Heart right ventricle (tissue), 16 donors: ENCODE measurements at regions of chr12 and their contacts with region 1.

Region 1: DNA sequence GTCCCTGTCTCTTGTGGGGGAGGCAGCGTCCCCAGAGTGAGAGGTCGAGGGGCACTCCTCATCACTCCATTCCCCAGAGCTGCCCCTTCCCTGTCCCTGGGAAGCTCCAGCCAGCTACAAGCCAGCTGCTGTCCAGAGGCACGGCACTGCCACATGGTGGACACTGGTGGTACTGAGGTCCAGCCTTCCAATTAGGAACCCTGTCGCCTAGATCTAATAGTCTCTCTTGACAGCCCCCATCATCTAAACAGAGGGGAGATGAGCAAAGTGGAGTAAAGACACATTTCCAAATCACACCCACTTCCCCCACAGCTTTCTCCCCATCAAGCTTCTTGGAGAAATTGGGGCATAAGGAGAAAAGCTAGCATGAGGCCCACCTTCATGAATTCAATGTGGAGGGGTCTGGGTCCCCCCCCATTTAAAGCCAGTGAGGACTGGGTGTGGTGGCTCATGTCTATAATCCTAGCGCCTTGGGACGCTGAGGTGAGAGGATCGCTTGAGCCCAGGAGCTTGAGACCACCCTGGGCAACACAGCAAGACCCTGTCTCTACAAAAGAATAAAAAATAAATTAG is 2.1 kb upstream of the INHBE start:
- DNase-seq: peak; percentile 82
- ATAC-seq: peak; percentile 81 to 91 (median 86)
- H3K4me3 ChIP-seq: no peak overlapping the region
- H3K27ac ChIP-seq: peak overlapping the region in 9 of 10 donors; percentile 38 to 95 (median 86)
- H3K4me1 ChIP-seq: peaks cover 0 to 26% (median 9%) of the 10 kb centered on the region in 9 donors
- H3K27me3 ChIP-seq: no peaks in the 10 kb centered on the region
- CTCF ChIP-seq: peak; percentile 82 to 94 (median 92)

Region 2: DNA sequence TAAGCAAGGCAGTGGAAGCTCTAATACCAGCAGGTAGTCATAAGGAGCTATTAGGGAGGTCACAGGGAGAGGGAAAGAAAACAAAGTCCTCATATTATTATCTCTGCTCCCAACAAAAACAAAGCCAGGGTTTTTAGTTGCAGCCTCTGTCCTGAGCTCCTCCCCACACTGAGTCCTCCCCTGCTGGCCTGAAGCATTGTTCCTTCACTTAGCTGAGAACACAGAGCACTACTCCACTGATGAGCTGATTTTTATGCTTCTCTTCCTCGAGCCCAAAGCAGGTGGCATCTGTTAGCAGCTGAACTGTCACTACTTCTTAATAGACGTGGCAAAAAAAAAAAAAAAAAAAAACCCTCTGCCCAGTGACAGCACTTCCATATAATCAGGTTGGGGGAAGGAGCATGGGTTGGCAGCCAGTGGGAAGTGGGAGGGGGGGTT is 191.6 kb before region 1 on chr12:
- intact Hi-C with region 1: loop called in 7 of 10 experiments (anchors 1 to 5 kb)
- DNase-seq: no peak
- ATAC-seq: peak in 6 of 8 donors; percentile 17 to 58 (median 43)
- H3K4me3 ChIP-seq: no peak overlapping the region
- H3K27ac ChIP-seq: peak overlapping the region in 9 of 10 donors; percentile 41 to 90 (median 83)
- H3K4me1 ChIP-seq: peaks cover 6 to 70% (median 28%) of the 10 kb centered on the region in 9 donors
- H3K27me3 ChIP-seq: no peaks in the 10 kb centered on the region
- CTCF ChIP-seq: no peak

Region 3: DNA sequence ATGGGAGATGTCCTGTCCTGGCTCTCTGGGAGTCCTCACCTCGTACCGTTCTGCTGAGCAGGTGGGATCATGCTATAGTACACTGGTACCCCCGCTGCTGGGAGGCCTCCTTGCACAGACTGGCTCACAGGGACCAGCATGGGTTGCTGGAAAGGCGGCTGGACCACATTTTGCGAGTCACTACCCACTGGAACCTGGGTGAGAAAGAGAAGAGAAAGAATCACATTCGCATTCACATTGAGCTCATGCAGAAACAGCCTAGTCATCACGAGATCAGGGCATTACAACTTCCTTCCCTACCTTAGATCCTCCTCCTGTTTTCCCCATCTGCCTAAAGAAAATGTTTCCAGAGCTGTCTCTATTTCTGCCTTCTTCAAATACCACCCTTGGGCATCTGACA is 184.8 kb before region 1 on chr12:
- intact Hi-C with region 1: loop called in 7 of 10 experiments (anchors 1 to 5 kb)
- DNase-seq: no peak
- ATAC-seq: no peak
- H3K4me3 ChIP-seq: no peak overlapping the region
- H3K27ac ChIP-seq: no peak overlapping the region
- H3K4me1 ChIP-seq: peaks cover 3 to 52% (median 24%) of the 10 kb centered on the region in 9 donors
- H3K27me3 ChIP-seq: no peaks in the 10 kb centered on the region
- CTCF ChIP-seq: no peak

Region 4: DNA sequence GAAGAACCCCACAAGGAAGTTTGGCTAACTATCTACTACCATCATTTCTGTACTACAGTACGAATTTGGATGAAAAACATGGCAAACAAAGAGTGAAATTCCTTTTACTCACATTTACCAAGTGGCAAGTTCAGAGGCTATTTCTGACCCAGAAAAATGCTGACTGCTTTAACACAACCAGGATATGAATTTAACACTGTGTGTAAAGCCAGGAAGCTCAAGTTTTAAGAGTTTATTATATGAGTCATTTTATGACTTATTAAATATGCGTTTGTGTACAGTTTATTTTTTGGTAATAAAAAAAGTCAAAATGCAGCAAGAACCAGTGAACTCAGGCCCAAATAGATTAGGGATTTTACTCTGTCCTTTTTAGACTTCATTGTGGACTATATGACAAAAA is 143.6 kb before region 1 on chr12:
- intact Hi-C with region 1: loop called (anchors 1 to 5 kb)
- DNase-seq: no peak
- ATAC-seq: no peak
- H3K4me3 ChIP-seq: no peak overlapping the region
- H3K27ac ChIP-seq: peak overlapping the region in 5 of 10 donors; percentile 9 to 60 (median 55)
- H3K4me1 ChIP-seq: peaks cover 0 to 19% (median 2%) of the 10 kb centered on the region in 9 donors
- H3K27me3 ChIP-seq: no peaks in the 10 kb centered on the region
- CTCF ChIP-seq: no peak

Region 5: DNA sequence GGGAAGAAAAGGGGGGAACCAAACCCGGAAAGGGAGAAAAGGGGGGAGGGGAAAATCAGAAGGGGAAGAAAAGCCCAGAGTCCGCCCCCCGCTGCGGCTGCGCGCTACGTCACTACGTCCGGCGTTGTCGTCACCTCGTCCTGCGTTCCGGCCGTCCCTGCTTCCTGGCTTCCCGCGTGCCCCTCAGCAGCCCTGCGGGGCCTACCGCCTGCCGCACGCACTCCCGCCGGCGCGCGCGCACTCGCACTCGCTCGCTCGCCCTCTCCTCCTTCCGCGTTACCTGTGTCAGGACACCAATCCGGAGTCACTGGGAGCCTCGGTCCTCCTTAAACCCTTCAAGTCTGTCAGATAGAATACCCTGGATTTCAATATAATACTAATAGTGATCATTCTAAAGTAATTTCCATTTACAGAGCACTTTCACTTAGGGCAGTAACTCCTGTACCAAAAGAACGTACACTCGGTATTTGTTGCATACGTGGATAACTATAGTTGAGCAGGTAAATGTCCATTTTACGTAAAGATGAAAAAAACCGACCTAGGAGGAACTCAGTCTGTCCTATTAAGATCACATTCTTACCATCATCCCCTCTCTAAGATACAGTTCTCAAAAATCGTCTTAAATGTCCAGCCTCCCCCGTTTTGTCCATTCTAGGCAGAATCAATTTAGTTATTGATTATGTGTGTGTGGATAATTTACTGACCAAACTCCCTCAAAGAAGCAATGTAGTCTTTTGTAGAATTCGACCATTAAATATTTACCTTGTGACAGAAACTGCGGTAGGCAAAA is 21.9 kb before region 1 on chr12 and contains the start of gene R3HDM2:
- intact Hi-C with region 1: loop called in 2 of 10 experiments (anchors 2 kb)
- DNase-seq: peak; percentile 96
- ATAC-seq: peak; percentile 96 to 99 (median 98)
- H3K4me3 ChIP-seq: peak within 1 kb of the TSS; percentile 42 to 80 (median 66)
- H3K27ac ChIP-seq: peak within 1 kb of the TSS; percentile 85 to 98 (median 94)
- H3K4me1 ChIP-seq: peaks cover 0 to 24% (median 15%) of the 10 kb centered on the region in 9 donors
- H3K27me3 ChIP-seq: no peaks in the 10 kb centered on the region
- CTCF ChIP-seq: no peak
- total RNA-seq, gene R3HDM2: 43.7 to 107 (median 82.9) TPM